ENCODE measurements at regions of chr13 and their contacts with region 1.

Region 1: DNA sequence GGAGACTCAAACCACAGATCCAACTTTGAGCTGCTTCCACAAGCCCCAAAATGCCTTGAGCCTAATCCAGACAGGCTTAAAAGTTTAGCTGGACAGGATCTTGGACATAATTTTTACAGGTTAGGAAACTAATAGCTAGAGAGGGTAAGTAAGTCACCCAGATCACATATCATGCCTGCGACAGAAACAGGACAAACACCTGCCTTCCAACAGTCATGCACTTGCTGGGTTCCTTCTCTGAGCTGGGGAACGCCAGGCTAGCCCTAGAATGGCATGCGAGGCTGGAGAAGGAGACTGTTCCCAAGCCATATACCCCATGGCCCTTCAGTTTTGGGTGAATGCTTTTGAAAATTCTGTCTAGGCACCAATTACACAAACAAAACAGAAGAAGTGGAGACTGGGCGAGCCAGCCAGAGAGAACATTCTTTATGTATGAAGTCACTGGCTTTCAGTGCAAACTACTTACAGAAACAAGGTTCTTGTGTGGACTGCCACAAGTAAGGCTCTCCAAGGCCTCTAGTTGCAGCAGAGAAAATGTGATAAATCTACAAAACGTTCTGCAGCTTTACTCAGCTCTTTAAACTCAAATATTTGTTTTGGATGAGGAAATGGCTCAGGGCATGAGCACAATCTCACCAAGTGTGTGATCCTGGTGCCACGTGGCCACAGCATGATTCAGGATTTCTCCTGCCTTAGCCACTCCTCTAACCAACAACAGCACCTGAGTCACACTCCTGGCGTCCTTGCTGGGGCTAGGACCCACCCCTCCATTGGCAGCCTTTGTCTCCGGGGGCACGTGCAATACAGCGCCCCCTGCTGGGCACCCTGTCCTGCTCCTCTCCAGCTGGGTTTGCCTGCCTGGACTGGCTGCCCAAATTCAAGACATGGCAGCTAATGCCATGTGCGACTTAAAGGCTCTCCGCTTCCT is 73.4 kb upstream of the UBL3 start:
- DNase-seq: peak; percentile 77 to 81
- H3K4me3 ChIP-seq: no peak overlapping the region
- H3K27ac ChIP-seq: no peak overlapping the region
- H3K4me1 ChIP-seq: peaks cover 0 to 5% (median 4%) of the 10 kb centered on the region in 4 experiments; a peak in 5 of 7 replicates
- H3K27me3 ChIP-seq: peaks cover 0 to 7% (median 3%) of the 10 kb centered on the region in 4 experiments; a peak in 3 of 7 replicates
- CTCF ChIP-seq: peak; percentile 77 to 86 (median 85)
- EP300 ChIP-seq: 0 out of 3 replicates have a peak, but pooled peaks of 1 of the 2 experiments have one; percentile 12
- POLR2A ChIP-seq: no peak
- RAD21 ChIP-seq: peak; percentile 66 to 81

Region 2: GRCh38 chr13:29771247-29771646 is 152.6 kb before region 1 on chr13:
- CTCF ChIA-PET with region 1: interaction called, 12 read pairs
- POLR2A ChIA-PET with region 1: no interaction called
- DNase-seq: no peak
- H3K4me3 ChIP-seq: no peak overlapping the region
- H3K27ac ChIP-seq: no peak overlapping the region
- H3K4me1 ChIP-seq: no peaks in the 10 kb centered on the region
- H3K27me3 ChIP-seq: no peaks in the 10 kb centered on the region
- CTCF ChIP-seq: peak in 1 of 3 experiments; percentile 15; a peak in 1 of 4 replicates
- EP300 ChIP-seq: no peak
- POLR2A ChIP-seq: no peak
- RAD21 ChIP-seq: peak in 1 of 2 experiments; percentile 56; a peak in 3 of 4 replicates

Region 3: DNA sequence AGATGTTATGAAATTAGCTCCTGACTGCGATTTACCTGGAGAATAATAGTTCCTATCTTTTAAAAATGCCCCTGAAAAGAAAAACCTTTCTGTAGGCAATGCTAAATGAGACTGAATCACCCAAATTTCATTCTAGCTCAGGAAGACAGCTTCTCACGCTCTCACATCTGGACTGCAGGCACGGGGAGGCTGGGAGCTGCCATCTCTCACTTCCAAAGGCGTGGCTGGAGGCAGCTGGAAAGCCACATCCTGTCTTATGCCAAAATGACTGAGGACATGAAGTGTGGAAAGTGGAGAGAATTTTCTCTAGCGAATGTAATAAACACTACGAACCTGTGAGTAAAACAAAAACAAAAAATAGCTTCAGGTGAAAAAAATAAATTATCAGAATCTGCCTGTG is 15.4 kb before region 1 on chr13:
- CTCF ChIA-PET with region 1: interaction called, 14 read pairs
- POLR2A ChIA-PET with region 1: no interaction called
- DNase-seq: no peak
- H3K4me3 ChIP-seq: no peak overlapping the region
- H3K27ac ChIP-seq: no peak overlapping the region
- H3K4me1 ChIP-seq: no peaks in the 10 kb centered on the region
- H3K27me3 ChIP-seq: no peaks in the 10 kb centered on the region
- CTCF ChIP-seq: no peak
- EP300 ChIP-seq: no peak
- POLR2A ChIP-seq: no peak
- RAD21 ChIP-seq: no peak

Region 4: DNA sequence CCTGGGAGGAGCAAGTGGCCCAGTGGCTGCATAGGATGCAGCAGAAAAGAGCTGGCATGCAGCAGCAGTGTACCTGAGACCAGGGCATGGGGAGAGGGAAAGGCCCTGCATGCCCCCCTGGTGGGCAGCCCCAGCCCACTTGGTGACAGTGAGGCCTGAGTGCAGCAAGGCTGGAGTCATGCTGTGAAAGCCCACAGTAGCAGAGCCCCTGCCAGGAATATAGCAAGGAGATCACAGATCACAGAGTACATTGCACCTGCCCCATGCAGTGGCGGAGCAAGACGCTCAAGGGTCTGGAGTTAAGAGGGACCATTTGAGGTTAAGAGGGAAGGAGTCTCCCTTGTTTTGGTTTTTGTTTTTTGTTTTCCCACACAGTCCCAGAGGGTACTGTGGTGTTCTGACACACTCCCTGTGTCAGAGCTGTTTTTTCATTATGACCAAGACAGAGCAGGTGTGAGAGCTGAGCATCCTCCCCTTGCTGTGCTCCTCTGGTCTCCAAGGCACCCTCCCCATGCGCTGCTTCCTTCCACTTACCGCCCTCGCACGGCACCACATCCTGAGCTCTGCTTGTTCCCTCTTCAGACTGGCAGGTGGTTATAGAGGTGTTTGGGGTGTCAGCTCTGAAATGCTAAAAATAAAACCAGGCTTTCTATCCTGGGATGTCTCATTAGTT is 11.6 kb after region 1 on chr13:
- CTCF ChIA-PET with region 1: interaction called, 97 read pairs
- POLR2A ChIA-PET with region 1: interaction called, 5 read pairs
- DNase-seq: no peak
- H3K4me3 ChIP-seq: no peak overlapping the region
- H3K27ac ChIP-seq: no peak overlapping the region
- H3K4me1 ChIP-seq: peaks cover 2 to 20% (median 10%) of the 10 kb centered on the region in 4 experiments; a peak in 6 of 7 replicates
- H3K27me3 ChIP-seq: peaks cover 0 to 9% (median 6%) of the 10 kb centered on the region in 4 experiments; a peak in 3 of 7 replicates
- CTCF ChIP-seq: no peak
- EP300 ChIP-seq: no peak
- POLR2A ChIP-seq: no peak
- RAD21 ChIP-seq: no peak

Region 5: DNA sequence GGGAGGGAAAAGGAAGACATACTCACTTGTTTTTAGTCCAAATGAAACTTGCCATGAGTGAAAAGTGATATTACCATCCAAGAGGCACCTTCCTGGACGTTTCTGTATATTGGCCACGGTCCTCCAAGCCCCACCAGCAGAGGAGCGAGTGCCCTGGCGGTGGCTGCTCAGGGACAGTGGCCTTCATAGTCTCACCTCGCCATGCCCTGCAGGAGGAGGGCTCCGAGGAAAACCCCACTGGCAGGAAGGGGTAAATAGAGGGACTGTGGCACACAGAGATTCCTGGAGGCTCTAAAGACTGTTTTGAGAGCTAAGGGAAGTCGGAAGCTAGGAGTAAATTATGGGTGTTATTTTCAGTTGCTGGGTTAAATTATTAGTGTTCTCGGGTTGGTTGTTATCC is 25.0 kb after region 1 on chr13:
- CTCF ChIA-PET with region 1: interaction called, 11 read pairs
- POLR2A ChIA-PET with region 1: no interaction called
- DNase-seq: no peak
- H3K4me3 ChIP-seq: no peak overlapping the region
- H3K27ac ChIP-seq: no peak overlapping the region
- H3K4me1 ChIP-seq: peaks cover 0 to 3% (median 0%) of the 10 kb centered on the region in 4 experiments; a peak in 2 of 7 replicates
- H3K27me3 ChIP-seq: peaks cover 0 to 8% (median 2%) of the 10 kb centered on the region in 4 experiments; a peak in 2 of 7 replicates
- CTCF ChIP-seq: no peak
- EP300 ChIP-seq: no peak
- POLR2A ChIP-seq: no peak
- RAD21 ChIP-seq: no peak

Region 6: DNA sequence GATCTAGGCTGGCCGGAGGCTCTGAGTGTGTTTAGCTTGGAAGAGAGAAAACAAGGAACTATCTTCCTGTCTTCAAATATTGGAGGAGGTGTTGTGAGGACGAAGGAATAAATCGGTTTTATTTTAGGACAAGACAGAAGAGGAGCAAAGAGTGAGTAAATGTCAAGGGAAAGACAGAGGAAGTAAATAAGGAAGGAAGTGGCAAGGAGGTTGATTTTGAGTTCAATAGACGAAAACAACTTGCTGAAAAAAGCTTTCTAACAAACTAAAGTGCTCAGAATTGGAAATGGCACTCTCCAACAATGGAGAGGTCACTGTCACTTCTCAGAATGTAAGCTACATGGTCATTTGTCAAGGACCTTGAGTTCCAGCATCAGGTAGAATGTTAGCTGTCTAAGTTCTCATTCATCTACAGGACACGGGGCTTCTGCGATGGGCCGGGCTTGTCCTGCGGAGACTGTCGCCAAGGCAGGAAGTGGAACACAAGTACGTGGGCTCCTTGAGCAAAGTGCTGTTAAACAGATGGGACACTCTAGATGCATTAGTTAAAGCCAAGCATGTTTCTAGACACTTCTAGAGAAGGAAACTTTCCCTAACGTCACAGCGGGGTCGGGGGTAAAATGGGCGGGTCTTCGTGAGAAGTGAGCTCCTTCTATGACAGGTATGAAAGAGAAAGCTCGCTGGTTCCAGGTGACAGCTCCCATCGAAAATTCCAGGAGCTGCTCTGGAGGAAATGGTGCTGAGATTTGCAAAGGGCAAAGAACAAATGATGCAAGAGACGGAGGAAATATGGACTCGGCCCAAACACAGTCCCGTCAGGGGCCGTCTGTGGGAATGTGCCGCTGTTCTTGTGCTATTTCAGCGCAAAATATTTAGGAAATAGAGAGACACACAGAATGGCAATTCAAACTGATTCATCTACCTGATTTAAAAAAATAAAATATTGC is 30.5 kb after region 1 on chr13:
- CTCF ChIA-PET with region 1: interaction called, 14 read pairs
- POLR2A ChIA-PET with region 1: interaction called, 3 read pairs
- DNase-seq: no peak
- H3K4me3 ChIP-seq: no peak overlapping the region
- H3K27ac ChIP-seq: no peak overlapping the region
- H3K4me1 ChIP-seq: peaks cover 0 to 15% (median 5%) of the 10 kb centered on the region in 4 experiments; a peak in 4 of 7 replicates
- H3K27me3 ChIP-seq: no peaks in the 10 kb centered on the region
- CTCF ChIP-seq: no peak
- EP300 ChIP-seq: no peak
- POLR2A ChIP-seq: no peak
- RAD21 ChIP-seq: no peak

Region 7: DNA sequence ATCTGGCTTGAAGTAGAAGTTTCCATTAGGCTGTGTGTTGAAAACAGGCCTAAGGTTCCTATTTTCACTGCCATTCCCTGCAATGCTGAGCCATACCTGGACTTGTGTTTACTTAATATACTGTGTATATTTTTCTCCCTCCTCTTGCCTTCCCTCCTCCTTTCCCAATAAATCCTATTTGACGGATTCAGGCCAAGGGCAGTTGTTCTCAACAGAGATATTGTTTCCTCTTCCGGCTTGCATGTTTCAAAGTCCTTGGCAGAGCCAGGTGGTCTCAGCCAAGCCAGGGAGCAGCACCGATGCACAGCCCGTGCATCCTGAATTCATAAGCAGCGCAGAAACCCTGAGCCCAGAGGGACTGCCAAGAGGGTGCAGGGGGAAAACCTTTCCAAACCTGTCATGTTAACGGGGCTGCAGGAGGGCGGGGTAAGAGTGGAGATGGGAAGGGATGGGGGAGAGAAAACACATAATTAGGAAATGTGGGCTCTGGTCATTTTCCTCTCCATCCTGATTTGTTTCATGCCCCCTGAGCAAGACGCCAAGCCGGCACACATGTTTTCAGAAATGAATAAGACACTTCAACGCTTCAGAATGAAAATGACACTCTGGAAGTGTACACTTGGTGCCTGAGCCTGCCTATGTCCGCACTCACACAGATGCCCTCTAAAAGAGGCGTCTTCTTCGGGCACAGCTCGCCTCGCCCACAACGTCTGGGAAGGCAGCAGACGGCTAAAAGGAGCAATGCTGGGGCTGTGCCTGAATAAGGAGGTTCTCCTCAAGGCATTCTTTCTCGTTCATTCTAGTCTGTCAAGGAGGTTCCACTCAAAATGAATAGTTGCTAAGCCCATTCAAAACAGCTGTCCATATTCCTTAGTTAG is 75.9 kb after region 1 on chr13:
- CTCF ChIA-PET with region 1: no interaction called
- POLR2A ChIA-PET with region 1: no interaction called
- DNase-seq: no peak
- H3K4me3 ChIP-seq: no peak overlapping the region
- H3K27ac ChIP-seq: no peak overlapping the region
- H3K4me1 ChIP-seq: peaks cover 0 to 2% (median 0%) of the 10 kb centered on the region in 4 experiments; a peak in 1 of 7 replicates
- H3K27me3 ChIP-seq: no peaks in the 10 kb centered on the region
- CTCF ChIP-seq: no peak
- EP300 ChIP-seq: no peak
- POLR2A ChIP-seq: no peak
- RAD21 ChIP-seq: no peak

Region 8: DNA sequence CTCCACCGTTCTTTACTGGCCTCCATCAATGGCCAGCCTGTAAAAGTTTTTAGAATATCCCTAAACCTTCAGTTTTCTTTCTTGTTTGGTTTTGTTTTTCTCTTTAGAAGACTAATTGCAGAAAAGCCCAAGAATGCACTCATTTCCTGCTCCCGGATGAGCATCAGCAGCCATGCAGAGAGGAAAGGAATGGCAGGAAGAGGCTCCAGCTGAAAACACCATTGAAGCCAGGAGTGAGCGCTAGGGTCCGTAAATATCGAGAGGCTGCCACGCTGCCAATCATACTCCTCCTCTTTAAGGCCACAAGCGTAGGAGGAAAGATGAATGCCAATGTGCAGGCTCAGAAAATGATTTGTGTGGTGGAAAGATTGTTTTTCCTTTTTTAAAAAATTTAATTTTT is 441.1 kb after region 1 on chr13:
- CTCF ChIA-PET with region 1: no interaction called
- POLR2A ChIA-PET with region 1: no interaction called
- DNase-seq: no peak
- H3K4me3 ChIP-seq: no peak overlapping the region
- H3K27ac ChIP-seq: no peak overlapping the region
- H3K4me1 ChIP-seq: peaks cover 0 to 4% (median 0%) of the 10 kb centered on the region in 4 experiments; a peak in 1 of 7 replicates
- H3K27me3 ChIP-seq: no peaks in the 10 kb centered on the region
- CTCF ChIP-seq: no peak
- EP300 ChIP-seq: no peak
- POLR2A ChIP-seq: no peak
- RAD21 ChIP-seq: no peak